RWPE1 (cell line): ENCODE measurements at regions of chr2 and their contacts with region 1.

Region 1: DNA sequence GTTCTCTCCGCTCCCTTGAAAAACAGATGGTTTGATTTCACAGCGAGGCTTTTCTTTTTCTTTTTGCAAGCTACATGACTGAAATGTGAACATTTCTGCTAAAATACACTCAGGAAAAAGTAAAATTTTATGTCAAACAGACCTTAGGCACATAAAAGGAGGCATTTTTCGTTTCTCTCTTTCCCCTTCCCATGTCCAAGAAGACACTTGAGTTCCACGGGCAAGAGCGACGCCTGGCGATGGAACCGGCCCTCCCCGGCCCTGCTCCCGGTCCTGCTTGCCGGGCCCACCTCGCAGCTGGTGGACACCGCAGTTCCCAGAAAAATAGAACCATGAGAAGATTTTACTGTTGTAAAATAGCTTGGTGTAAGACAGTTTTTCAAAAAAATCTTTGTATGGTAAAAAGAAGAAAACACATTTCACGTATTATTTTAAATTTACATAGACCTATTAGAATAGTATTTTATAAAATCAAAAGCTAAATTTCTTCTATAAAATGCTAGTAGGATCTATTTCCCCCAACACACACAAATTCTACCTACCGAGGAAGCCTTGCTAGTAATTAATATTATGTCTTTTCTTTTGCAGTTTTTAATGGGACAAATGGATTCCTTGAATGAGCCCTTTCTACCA is 2.3 kb upstream of the ALKAL2 start:
- DNase-seq: peak; percentile 52
- H3K27ac ChIP-seq: no peak overlapping the region
- CTCF ChIP-seq: peak; percentile 78

Region 2: DNA sequence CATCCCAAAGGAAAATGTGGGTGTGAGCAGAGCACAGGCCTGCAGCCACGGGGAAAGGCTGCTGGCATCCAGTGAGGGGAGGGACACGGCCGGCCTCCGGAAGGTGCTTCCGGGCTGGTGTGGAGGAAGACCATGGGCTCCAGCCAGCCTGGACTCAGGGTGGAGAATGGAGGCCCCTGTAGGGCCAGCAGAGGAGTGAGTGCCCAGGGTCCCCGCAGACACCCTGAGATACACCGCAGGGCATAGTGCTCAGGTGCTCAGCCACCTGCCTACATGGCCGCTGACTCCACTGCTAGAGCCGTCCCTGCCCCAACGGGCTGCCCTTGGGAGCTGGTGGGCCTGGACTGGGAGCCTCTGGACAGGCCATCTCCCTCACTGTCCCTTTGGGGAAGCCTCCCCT is 632.0 kb after region 1 on chr2:
- CTCF ChIA-PET with region 1: interaction called, 10 read pairs
- POLR2A ChIA-PET with region 1: no interaction called
- DNase-seq: no peak
- H3K27ac ChIP-seq: no peak overlapping the region
- CTCF ChIP-seq: no peak